Activated CD4-positive, alpha-beta T cell treated with anti-CD3 and anti-CD28 coated beads for 36 hours (primary cell): ENCODE measurements at regions of chr2 and their contacts with region 1.

Region 1: GRCh38 chr2:88600038-88600465 is 27.2 kb downstream of the EIF2AK3 start:
- DNase-seq: peak; percentile 59
- ATAC-seq: peak; percentile 100
- H3K4me3 Mint-ChIP-seq: no peak overlapping the region
- H3K27ac Mint-ChIP-seq: no peak overlapping the region
- H3K4me1 Mint-ChIP-seq: peaks cover 43% of the 10 kb centered on the region
- H3K27me3 Mint-ChIP-seq: no peaks in the 10 kb centered on the region

Region 2: GRCh38 chr2:88099798-88100488 is 500.1 kb before region 1 on chr2:
- CTCF ChIA-PET with region 1: no interaction called
- POLR2A ChIA-PET with region 1: no interaction called
- intact Hi-C with region 1: no loop called
- DNase-seq: peak; percentile 9
- ATAC-seq: peak; percentile 26
- H3K4me3 Mint-ChIP-seq: no peak overlapping the region
- H3K27ac Mint-ChIP-seq: no peak overlapping the region
- H3K4me1 Mint-ChIP-seq: no peaks in the 10 kb centered on the region
- H3K27me3 Mint-ChIP-seq: peaks cover 6% of the 10 kb centered on the region

Region 3: GRCh38 chr2:88136817-88137216 is 463.2 kb before region 1 on chr2:
- CTCF ChIA-PET with region 1: no interaction called
- POLR2A ChIA-PET with region 1: no interaction called
- intact Hi-C with region 1: no loop called
- DNase-seq: no peak
- ATAC-seq: no peak
- H3K4me3 Mint-ChIP-seq: no peak overlapping the region
- H3K27ac Mint-ChIP-seq: no peak overlapping the region
- H3K4me1 Mint-ChIP-seq: no peaks in the 10 kb centered on the region
- H3K27me3 Mint-ChIP-seq: peaks cover 14% of the 10 kb centered on the region

Region 4: GRCh38 chr2:88458633-88459032 is 141.4 kb before region 1 on chr2:
- CTCF ChIA-PET with region 1: no interaction called
- POLR2A ChIA-PET with region 1: no interaction called
- intact Hi-C with region 1: no loop called
- DNase-seq: no peak
- ATAC-seq: no peak
- H3K4me3 Mint-ChIP-seq: no peak overlapping the region
- H3K27ac Mint-ChIP-seq: no peak overlapping the region
- H3K4me1 Mint-ChIP-seq: no peaks in the 10 kb centered on the region
- H3K27me3 Mint-ChIP-seq: peaks cover 32% of the 10 kb centered on the region

Region 5: GRCh38 chr2:88638743-88639142 is 38.7 kb after region 1 on chr2:
- CTCF ChIA-PET with region 1: no interaction called
- POLR2A ChIA-PET with region 1: interaction called, 3 read pairs
- intact Hi-C with region 1: loop called (anchors 1 kb)
- DNase-seq: peak; percentile 41
- ATAC-seq: peak; percentile 71
- H3K4me3 Mint-ChIP-seq: no peak overlapping the region
- H3K27ac Mint-ChIP-seq: no peak overlapping the region
- H3K4me1 Mint-ChIP-seq: peaks cover 23% of the 10 kb centered on the region
- H3K27me3 Mint-ChIP-seq: peaks cover 2% of the 10 kb centered on the region